GM10248 (cell line): ENCODE measurements at regions of chr17 and their contacts with region 1.

Region 1: GRCh38 chr17:17016199-17016866 is 25.9 kb upstream of the MPRIP start:
- DNase-seq: no peak
- CTCF ChIP-seq: no peak

Region 2: DNA sequence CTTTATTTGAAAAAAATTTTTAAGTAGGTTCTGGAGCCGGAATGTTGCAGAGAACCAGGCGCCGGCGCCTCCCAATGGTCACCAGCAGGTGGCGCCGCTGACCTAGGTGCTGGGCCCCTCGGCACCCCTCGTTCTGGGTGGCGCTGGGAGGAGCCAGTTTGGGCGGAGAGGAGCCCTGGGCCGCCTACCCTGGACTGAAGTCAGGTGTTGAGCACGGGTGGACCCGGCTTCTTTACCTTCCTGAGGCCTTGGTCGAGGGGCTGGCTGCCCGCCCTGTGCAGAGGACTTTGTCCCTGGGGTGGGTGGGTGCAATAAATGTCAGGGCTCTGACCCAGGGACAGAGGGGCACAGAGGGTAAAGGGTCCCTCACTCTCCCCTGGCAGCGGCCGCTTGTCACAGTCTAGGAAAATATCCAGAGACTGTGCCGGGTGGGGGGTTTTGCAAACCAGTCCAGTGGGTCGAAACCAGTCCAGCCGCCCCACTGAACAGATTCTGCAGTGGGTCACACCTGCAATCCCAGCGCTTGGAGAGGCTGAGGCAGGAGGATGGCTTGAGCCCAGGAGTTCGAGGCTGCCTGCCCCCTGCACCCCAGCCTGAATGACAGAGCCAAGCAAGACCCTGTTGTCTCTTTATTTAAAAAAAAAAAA is 14.3 kb before region 1 on chr17:
- CTCF ChIA-PET with region 1: interaction called, 15 read pairs
- POLR2A ChIA-PET with region 1: no interaction called
- DNase-seq: peak; percentile 89
- CTCF ChIP-seq: peak; percentile 92

Region 3: DNA sequence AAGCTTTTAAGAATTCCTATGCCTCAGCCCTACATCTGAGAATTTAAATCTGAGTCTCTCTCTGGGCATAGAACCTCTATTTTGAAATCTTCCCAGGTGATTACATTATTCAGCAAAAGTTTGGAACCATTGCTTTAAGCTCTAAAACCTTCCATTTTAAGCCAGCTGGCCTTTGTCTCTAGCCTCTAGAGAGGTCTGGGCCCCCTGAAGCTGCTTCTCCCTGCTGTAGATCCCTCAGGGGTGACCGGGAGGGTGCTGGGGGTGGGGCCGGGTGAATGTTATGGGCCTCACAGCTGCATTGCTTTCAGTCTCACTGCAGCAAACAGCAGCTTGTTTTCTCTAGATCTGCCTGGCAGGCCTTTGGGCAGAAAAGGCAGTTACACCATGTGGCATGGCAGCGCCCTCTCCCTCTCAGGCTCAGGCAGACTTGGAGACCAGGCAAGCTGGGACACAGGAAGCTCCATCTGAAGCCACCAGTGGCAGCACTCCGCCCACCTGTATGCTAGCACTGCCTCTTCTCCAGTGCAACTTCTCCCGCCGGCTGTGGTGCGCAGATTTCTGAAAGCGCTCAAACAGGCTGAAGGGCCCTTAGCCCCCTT is 92.2 kb after region 1 on chr17:
- CTCF ChIA-PET with region 1: no interaction called
- POLR2A ChIA-PET with region 1: no interaction called
- DNase-seq: no peak
- CTCF ChIP-seq: no peak